ENCODE measurements at regions of chr4 and their contacts with region 1.

Region 1: GRCh38 chr4:94406668-94407437 is 44.9 kb upstream of the PDLIM5 start:
- DNase-seq: peak; percentile 63 to 94 (median 83)
- H3K4me3 ChIP-seq: no peak overlapping the region
- H3K27ac ChIP-seq: no peak overlapping the region
- H3K4me1 ChIP-seq: peaks cover 0 to 23% of the 10 kb centered on the region in 2 donors
- H3K27me3 ChIP-seq: no peaks in the 10 kb centered on the region
- CTCF ChIP-seq: peak; percentile 73 to 97 (median 84)
- POLR2A ChIP-seq: no peak

Region 2: DNA sequence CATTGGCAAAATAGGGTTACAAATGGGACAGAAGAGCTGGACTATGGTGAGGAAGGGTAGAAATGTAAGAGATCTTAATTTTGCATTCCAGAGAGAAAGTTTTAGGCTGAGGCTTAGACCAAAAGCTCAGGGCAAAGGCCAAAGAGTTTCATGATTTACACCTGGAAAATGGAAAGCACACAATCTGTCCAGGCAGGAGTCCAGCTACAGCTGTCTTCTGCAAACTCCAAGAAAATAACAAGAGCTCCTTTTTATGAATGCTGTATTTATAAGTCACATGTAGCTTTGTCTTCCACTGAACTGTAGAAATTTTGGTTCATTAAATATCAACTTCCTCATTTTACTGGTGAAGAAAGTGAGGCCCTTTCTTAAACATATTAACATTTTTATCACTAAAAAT is 866.3 kb before region 1 on chr4:
- intact Hi-C with region 1: no loop called
- DNase-seq: no peak
- H3K4me3 ChIP-seq: no peak overlapping the region
- H3K27ac ChIP-seq: no peak overlapping the region
- H3K4me1 ChIP-seq: no peaks in the 10 kb centered on the region
- H3K27me3 ChIP-seq: no peaks in the 10 kb centered on the region
- CTCF ChIP-seq: no peak
- POLR2A ChIP-seq: no peak

Region 3: DNA sequence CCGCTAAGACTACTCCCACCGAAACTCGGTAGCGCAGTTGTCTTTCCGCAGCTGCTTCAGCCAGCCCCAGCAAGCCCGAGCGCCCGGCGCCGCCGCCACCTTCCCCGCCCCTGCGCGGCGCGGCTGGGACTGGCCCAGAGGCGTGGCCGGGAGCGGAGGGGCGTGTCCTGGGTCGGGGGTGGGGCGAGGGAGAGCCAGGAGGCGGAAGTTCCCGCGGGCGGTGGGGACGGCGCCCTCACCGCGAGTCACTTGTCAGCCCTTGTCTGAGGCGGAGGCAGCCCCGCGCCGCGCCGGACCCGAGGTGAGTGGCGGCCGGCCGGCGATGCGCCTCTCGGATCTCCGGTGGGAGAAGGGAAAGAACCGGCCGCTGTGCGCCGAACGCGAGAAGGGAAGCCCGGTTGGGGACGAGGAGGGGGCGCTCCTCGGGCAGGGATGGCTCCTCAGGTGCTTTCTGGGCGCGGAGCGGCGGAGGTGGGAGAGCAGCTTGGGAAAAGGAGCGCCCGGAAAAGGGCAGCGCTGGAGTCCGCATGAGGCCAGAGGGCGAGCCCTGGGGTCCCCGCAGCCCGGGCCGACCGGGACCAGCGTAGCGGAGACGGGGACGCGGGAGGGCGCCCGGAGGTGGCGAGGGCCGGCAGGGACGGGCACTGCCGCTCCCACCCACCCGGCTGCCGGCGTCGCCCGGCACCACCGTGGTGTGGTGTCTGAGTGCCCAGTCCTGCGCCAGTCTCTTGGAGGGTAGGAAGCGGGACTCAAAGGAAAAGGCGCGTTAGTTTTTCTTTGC is 45.0 kb after region 1 on chr4 and contains the start of gene PDLIM5:
- intact Hi-C with region 1: loop called in 1 of 2 experiments (anchors 5 kb)
- DNase-seq: peak; percentile 87 to 95 (median 93)
- H3K4me3 ChIP-seq: peak within 1 kb of the TSS; percentile 27 to 92 (median 64)
- H3K27ac ChIP-seq: peak within 1 kb of the TSS; percentile 68 to 98 (median 94)
- H3K4me1 ChIP-seq: peaks cover 11 to 42% of the 10 kb centered on the region in 2 donors
- H3K27me3 ChIP-seq: no peaks in the 10 kb centered on the region
- CTCF ChIP-seq: peak in 2 of 6 experiments; percentile 3 to 5
- POLR2A ChIP-seq: peak; percentile 93 to 97
- total RNA-seq, gene PDLIM5: 53.9 to 150 (median 92.5) TPM

Region 4: DNA sequence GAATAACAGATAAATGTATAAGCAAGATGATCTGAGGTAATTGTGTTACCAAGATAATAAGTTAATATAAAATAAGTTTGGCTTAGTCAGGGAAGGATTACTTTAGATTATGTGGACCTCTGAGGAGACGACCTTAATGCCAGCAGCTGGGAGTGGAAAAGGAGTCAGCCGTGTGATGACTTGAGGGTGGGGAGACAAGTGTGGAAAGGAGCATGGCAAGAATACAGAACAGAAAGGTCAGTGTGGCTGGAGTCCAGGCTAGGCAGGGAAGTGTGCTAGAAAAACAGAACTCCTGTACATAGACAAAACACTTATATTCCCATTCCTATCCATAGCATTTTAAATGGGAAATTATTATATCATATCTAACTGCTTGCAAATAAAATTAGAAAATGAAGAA is 183.6 kb after region 1 on chr4:
- intact Hi-C with region 1: loop called (anchors 5 kb)
- DNase-seq: no peak
- H3K4me3 ChIP-seq: no peak overlapping the region
- H3K27ac ChIP-seq: no peak overlapping the region
- H3K4me1 ChIP-seq: peaks cover 0 to 8% of the 10 kb centered on the region in 2 donors
- H3K27me3 ChIP-seq: no peaks in the 10 kb centered on the region
- CTCF ChIP-seq: no peak
- POLR2A ChIP-seq: no peak

Region 5: DNA sequence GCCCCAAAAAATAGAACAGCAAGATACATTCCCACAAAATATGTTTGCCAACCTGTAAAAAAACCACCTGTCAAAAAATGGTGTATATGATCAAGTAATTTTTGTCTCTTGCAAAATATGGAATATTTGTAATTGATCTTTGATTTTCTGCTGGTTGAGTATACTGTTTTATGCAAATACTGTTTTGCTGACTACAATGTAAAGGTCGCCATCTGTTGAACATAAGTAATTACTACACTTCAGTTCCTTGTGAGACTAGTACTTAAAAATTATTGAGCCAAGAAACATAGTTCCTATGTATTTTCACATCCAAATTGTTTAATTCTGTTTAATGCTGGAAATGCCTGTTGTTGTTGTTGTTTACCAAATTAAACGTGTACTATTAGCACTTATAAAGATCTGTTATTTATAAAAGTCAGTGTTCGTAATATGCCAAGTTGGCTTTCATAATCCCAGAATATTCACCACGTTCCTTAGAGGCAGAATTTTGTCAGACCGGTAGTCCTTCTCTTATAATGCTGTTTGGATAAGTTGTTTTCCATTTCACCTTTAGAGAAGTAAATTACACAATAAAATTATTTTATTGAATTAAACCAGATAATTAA is 189.1 kb after region 1 on chr4:
- intact Hi-C with region 1: loop called (anchors 5 kb)
- DNase-seq: no peak
- H3K4me3 ChIP-seq: no peak overlapping the region
- H3K27ac ChIP-seq: no peak overlapping the region
- H3K4me1 ChIP-seq: no peaks in the 10 kb centered on the region
- H3K27me3 ChIP-seq: no peaks in the 10 kb centered on the region
- CTCF ChIP-seq: peak; percentile 46 to 88 (median 70)
- POLR2A ChIP-seq: no peak